A673 (cell line): ENCODE measurements at regions of chr22 and their contacts with region 1.

Region 1: DNA sequence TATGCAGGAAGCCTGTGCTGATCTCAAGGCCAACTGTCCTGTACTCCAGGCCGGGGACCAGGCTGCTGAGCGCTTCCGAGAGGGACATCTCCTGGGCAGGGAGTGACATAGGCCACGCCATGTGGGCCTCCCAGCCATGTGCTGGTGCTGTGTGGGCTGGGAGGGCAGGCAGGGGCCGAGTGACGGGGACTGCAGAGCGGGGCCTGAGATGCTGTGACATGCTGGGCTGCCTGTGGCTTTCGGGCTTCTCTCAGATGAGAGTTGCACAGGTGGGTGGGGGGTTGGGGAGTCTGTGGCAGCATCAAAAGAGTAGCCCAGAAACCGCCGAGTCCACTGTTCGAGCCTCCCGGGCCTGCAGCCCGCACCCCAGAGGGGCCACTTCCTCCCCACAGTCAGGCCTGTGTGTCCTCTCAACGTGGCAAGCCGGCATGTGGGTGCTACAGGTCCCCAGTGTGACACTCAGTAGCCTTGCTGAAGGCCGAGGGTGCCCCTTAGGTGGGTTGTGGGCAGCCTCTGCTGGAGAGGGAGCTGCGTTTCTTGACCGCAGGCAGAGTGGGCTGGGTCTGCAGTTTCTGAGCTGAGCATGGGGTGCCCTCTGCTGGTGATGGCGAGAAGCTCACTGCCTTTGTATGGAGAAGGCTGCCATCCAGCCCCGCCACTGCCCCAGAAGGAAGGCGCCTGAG is 101.2 kb downstream of the BCR start:
- DNase-seq: peak; percentile 85
- H3K4me3 ChIP-seq: no peak overlapping the region
- H3K27ac ChIP-seq: peak overlapping the region; percentile 63
- H3K4me1 ChIP-seq: no peaks in the 10 kb centered on the region
- H3K27me3 ChIP-seq: no peaks in the 10 kb centered on the region
- CTCF ChIP-seq: peak; percentile 90

Region 2: DNA sequence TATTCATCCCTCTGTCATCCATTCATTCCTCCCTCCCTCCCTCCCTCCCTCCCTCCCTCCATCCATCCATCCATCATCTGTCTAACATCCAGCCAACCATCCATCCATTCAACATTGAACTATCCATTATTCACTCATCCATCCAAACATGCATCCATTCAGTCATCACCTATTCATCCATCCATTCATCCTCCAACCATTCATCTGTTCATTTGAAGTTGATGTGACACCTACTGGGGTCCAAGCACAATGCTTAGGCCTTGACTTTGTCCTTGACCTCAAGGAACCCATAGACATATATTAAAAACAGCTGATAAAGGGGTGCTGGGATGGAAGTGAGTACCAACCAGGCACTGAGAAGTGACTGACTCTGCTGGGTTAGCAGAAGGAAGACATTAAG is 74.6 kb before region 1 on chr22:
- CTCF ChIA-PET with region 1: no interaction called
- POLR2A ChIA-PET with region 1: no interaction called
- intact Hi-C with region 1: no loop called
- DNase-seq: no peak
- H3K4me3 ChIP-seq: no peak overlapping the region
- H3K27ac ChIP-seq: no peak overlapping the region
- H3K4me1 ChIP-seq: no peaks in the 10 kb centered on the region
- H3K27me3 ChIP-seq: no peaks in the 10 kb centered on the region
- CTCF ChIP-seq: no peak

Region 3: DNA sequence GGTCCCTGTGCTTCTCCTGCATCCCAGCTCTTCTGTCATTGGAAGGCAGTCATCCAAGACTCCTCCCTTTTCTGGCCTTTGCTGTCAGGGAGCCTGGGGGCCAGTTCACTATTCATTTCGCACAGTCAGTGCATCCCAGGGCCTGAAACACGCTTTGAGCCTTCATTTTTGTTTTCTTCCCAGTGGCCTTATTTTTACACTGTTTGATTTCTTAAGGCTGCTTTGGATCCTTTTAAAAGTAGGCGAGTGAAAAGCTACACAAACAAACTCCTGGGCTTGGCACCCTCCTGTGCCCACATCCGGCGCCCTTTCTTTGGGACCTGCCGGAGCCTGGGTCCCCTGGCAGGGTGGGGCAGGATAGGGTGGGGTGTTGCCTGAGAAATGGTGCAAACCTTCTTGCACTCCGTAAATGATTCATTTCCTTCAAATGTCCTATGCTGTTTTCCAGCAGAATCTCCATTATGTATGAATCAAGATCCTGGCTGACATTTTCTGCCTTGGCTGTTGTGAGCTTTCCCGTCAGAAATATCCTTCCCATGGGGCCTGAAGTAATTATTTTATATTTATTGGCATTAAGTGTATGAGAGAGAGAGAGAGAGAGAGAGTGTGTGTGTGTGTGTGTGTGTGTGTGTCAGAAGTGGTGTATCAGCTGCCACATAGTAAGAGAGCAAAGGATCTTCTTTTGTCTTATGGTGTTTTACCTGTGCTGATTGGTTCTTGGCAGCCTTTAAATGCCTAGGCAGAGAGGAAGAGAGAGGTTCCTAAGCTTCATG is 55.6 kb before region 1 on chr22:
- CTCF ChIA-PET with region 1: interaction called, 11 read pairs
- POLR2A ChIA-PET with region 1: no interaction called
- intact Hi-C with region 1: no loop called
- DNase-seq: peak; percentile 88
- H3K4me3 ChIP-seq: no peak overlapping the region
- H3K27ac ChIP-seq: peak overlapping the region; percentile 62
- H3K4me1 ChIP-seq: peaks cover 31% of the 10 kb centered on the region
- H3K27me3 ChIP-seq: no peaks in the 10 kb centered on the region
- CTCF ChIP-seq: no peak